Body of pancreas (tissue), 4 donors: ENCODE measurements at regions of chr2 and their contacts with region 1.

Region 1: GRCh38 chr2:186256540-186256939 is 229.5 kb upstream of the ZC3H15 start:
- DNase-seq: no peak
- ATAC-seq: peak; percentile 45
- H3K4me3 ChIP-seq: no peak overlapping the region
- H3K27ac ChIP-seq: no peak overlapping the region
- H3K4me1 ChIP-seq: peaks cover 6% of the 10 kb centered on the region
- H3K27me3 ChIP-seq: no peaks in the 10 kb centered on the region
- CTCF ChIP-seq: peak in 6 of 7 experiments; percentile 29 to 59 (median 51)
- POLR2A ChIP-seq: no peak

Region 2: DNA sequence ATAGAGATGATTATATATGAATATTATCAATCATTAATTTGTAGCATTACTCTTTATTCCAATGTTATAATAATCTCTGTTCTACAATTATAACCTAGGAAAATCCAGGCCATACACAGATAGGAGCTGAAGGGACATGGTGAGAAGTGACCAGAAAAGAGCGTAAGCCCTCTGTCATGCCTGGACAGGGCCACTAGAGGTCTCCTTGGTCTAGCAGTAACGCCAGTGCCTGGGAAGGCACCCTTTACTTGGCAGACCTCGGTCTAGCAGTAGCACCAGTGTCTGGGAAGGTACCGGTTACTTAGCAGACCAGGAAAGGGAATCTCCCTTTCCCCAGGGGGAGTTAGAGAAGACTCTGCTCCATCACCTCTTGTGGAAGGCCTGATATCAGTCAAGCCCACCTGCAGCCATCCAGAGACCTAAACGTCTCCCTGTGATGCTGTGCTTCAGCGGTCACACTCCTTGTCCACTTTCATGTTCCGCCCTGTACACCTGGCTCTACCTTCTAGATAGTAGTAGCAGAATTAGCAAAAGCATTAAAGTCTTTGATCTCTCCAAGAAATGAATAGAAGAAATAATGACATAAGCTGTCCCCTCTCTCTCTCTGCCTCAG is 965.4 kb before region 1 on chr2:
- intact Hi-C with region 1: loop called (anchors 10 kb)
- DNase-seq: peak; percentile 73 to 84 (median 79)
- ATAC-seq: peak; percentile 88
- H3K4me3 ChIP-seq: no peak overlapping the region
- H3K27ac ChIP-seq: no peak overlapping the region
- H3K4me1 ChIP-seq: no peaks in the 10 kb centered on the region
- H3K27me3 ChIP-seq: no peaks in the 10 kb centered on the region
- CTCF ChIP-seq: peak; percentile 47 to 82 (median 75)
- POLR2A ChIP-seq: no peak